CD4-positive, alpha-beta T cell (primary cell): ENCODE measurements at regions of chr15 and their contacts with region 1.

Region 1: DNA sequence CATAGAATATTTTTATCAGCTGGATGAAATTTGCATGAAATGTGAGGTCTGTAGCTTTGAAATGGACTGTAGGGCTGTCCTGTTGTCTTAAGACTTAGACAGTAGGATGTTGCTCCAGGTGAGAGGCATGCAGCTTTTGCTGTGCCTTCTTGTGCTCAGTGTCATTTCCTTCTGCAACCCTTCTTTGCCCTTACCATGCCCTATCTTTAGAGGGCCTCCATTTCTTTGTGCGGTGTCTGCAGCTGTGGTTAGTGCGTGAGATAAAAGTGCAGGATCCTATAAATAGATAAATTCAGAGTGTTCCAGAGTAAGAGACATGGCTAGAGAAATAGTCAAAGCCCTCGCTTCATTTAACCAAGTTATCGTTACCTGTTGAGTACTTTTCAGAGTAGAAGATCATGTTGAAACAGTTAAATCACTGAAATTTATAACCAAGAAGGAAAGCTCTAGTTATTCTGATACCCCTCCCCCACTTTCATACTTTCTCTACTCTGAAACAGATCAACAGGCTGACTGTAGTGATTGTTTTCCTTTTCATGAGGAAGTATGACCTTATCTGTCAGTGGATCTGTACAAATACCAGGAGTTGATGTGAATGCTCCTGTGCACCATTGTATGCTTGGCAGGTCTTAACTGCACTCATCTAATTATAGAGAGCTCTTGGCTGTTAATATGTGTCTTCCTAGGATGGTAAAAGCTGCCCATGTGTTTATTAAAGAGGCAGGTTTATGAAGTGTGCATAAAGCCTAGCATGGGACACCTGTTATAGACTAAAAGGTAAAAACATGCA is 18.2 kb downstream of the EIF3J start:
- DNase-seq: peak in 3 of 14 experiments; percentile 19 to 32 (median 22)
- ATAC-seq: peak; percentile 77
- H3K4me3 ChIP-seq: no peak overlapping the region
- H3K4me3 Mint-ChIP-seq: peak overlapping the region; percentile 30
- H3K27ac ChIP-seq: peak overlapping the region in 1 of 2 donors; percentile 26
- H3K27ac Mint-ChIP-seq: peak overlapping the region; percentile 77
- H3K4me1 ChIP-seq: peaks cover 19% of the 10 kb centered on the region
- H3K4me1 Mint-ChIP-seq: peaks cover 47% of the 10 kb centered on the region
- H3K27me3 ChIP-seq: no peaks in the 10 kb centered on the region
- H3K27me3 Mint-ChIP-seq: no peaks in the 10 kb centered on the region
- CTCF ChIP-seq: no peak

Region 2: GRCh38 chr15:44536962-44537734 is 18.0 kb before region 1 on chr15 and contains the start of gene EIF3J:
- CTCF ChIA-PET with region 1: interaction called, 8 read pairs
- POLR2A ChIA-PET with region 1: interaction called, 14 read pairs
- intact Hi-C with region 1: no loop called
- DNase-seq: peak; percentile 86 to 99 (median 94)
- ATAC-seq: peak; percentile 89
- H3K4me3 ChIP-seq: peak within 1 kb of the TSS; percentile 68
- H3K4me3 Mint-ChIP-seq: peak within 1 kb of the TSS; percentile 92
- H3K27ac ChIP-seq: peak within 1 kb of the TSS; percentile 86 to 97
- H3K27ac Mint-ChIP-seq: peak within 1 kb of the TSS; percentile 91
- H3K4me1 ChIP-seq: peaks cover 42% of the 10 kb centered on the region
- H3K4me1 Mint-ChIP-seq: peaks cover 59% of the 10 kb centered on the region
- H3K27me3 ChIP-seq: no peaks in the 10 kb centered on the region
- H3K27me3 Mint-ChIP-seq: no peaks in the 10 kb centered on the region
- CTCF ChIP-seq: no peak
- total RNA-seq, gene EIF3J: 67.6 to 69.2 TPM